Posterior vena cava (tissue), 2 donors: ENCODE measurements at regions of chr2 and their contacts with region 1.

Region 1: DNA sequence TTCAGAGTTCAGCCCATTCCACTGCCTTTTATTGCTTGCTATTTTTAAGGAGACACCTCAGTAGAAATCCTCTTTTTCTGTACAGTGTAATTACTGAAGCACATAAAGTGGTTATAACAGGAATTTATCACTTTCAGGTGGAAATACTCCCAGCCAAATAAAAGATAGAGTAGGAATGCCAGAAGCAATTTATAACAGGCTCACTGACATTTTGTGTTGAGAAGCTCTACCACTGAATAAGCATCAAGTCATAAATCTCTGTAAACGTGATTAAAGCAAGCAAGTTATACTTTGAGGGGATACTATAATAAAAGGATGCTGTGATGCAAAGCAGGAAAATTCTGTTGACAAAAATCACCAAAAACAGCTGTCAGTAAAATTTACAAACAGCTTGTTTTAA is 6.7 kb upstream of the BARD1 start:
- DNase-seq: no peak

Region 2: GRCh38 chr2:213232649-213233437 is 1583.3 kb before region 1 on chr2:
- intact Hi-C with region 1: loop called in 1 of 2 experiments (anchors 5 kb)
- DNase-seq: no peak